IMR-90 (cell line): ENCODE measurements at regions of chr6 and their contacts with region 1.

Region 1: DNA sequence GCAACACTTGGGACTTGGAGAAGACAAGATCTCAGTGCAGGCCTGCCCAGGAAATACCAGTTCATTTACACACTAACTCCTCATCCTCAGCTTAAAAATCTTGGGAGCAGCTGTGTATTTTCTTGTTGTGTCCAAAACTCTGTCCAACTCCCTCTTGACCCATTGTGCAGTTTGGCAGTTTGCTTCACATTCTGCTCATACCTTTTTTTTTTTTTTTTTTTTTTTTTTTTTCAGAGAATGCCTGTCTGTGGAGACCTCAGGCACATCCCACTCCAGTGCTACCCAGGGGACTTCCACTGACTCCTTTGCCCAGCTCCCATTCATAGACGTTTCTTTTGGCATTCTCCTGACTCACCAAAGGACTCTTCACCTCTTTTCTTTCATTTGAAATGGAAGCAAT is 265.8 kb upstream of the TCF21 start:
- DNase-seq: peak; percentile 68
- ATAC-seq: peak; percentile 83
- H3K4me3 ChIP-seq: no peak overlapping the region
- H3K27ac ChIP-seq: peak overlapping the region; percentile 86
- H3K4me1 ChIP-seq: peaks cover 14% of the 10 kb centered on the region
- H3K27me3 ChIP-seq: no peaks in the 10 kb centered on the region
- CTCF ChIP-seq: no peak
- POLR2A ChIP-seq: no peak
- RAD21 ChIP-seq: no peak

Region 2: GRCh38 chr6:132520953-132521352 is 1102.1 kb before region 1 on chr6:
- CTCF ChIA-PET with region 1: no interaction called
- POLR2A ChIA-PET with region 1: no interaction called
- dilution Hi-C with region 1: no loop called
- in situ Hi-C with region 1: no loop called
- intact Hi-C with region 1: no loop called
- DNase-seq: peak; percentile 44
- ATAC-seq: no peak
- H3K4me3 ChIP-seq: no peak overlapping the region
- H3K27ac ChIP-seq: no peak overlapping the region
- H3K4me1 ChIP-seq: no peaks in the 10 kb centered on the region
- H3K27me3 ChIP-seq: peaks cover 26% of the 10 kb centered on the region
- CTCF ChIP-seq: no peak
- POLR2A ChIP-seq: no peak
- RAD21 ChIP-seq: no peak

Region 3: GRCh38 chr6:132972971-132973370 is 650.1 kb before region 1 on chr6:
- CTCF ChIA-PET with region 1: no interaction called
- POLR2A ChIA-PET with region 1: interaction called, 10 read pairs
- dilution Hi-C with region 1: no loop called
- in situ Hi-C with region 1: no loop called
- intact Hi-C with region 1: no loop called
- DNase-seq: no peak
- ATAC-seq: no peak
- H3K4me3 ChIP-seq: no peak overlapping the region
- H3K27ac ChIP-seq: no peak overlapping the region
- H3K4me1 ChIP-seq: no peaks in the 10 kb centered on the region
- H3K27me3 ChIP-seq: no peaks in the 10 kb centered on the region
- CTCF ChIP-seq: no peak
- POLR2A ChIP-seq: no peak
- RAD21 ChIP-seq: no peak